A549 (cell line): ENCODE measurements at regions of chr15 and their contacts with region 1.

Region 1: DNA sequence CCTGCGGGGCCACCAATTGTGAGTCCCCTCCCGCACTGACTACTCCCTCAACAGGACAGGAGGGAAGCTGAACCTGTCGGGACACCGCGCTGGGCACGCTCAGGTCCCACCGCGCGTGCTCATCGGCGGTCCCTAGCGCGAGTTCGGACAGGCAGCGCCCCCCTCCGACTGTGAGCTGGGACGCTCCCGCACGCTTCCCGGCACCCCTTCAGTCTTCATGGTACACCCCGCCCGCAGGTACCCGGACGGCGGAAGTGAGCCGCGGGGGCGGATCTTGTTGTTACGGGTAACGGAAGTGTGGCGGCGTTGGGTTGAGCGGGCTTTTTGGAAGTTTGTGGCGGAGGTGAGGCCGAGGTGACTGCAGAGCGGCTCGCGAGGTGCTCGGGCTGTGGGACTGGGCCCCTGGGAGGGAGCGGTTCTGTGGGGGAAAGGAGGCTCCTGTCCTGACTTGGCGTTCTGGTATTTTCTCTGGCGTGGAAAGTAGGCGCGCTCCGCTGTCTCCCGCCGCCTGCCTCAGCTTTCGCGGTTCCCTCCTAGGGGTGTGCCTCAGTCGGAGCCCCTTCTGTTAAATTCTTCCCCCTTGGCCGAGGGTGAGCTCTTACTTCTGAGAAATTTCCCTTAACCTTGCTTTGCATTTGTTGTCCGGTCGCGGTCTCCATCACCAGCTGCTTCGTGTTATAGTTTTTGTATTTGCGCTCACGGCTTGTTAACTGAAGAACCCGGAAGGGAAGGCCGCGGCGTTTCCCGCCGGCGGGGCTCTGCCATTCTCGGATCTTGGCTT is at the start of gene FANCI:
- DNase-seq: peak; percentile 96 to 97
- ATAC-seq: peak; percentile 98
- H3K4me3 ChIP-seq: peak within 1 kb of the TSS; percentile 82
- H3K27ac ChIP-seq: peak within 1 kb of the TSS; percentile 79 to 88
- H3K4me1 ChIP-seq: peaks cover 32% of the 10 kb centered on the region; the same call in 2 of the 3 replicates
- CTCF ChIP-seq: peak; percentile 86
- EP300 ChIP-seq: no peak
- POLR2A ChIP-seq: peak; percentile 85
- RAD21 ChIP-seq: peak; percentile 67 to 77
- polyA plus RNA-seq, gene FANCI: 97.3 and 123 TPM in 2 replicates

Region 2: DNA sequence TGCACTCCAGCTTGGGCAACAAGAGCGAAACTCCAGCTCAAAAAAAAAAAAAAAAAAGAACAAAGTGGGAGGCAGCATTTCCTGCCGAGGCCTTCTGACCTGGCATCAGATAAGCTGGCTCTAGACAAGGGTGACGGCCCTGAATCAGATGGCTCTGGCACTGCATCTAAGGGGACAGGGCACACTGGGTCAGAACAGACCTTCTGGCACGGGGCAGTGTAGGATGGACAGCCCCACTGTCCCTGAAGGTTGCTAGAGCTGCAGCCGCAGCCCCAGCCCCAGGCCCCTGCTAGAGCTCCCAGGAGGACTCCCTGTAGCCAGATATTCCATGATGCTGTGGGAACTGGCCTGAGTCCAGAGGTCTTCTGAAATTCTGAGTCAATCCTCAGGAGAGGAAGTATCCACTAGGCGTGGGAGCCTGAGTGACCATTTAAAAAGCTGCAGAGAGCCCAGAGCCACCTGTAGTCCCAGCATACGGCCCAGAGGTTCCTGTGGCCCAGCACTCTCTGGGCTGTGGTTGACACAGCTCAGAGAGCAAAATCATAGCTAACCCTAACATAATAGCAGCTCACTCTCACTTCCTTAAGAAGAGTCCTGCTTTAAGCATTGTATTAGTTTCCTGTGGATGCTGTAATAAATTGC is 261.5 kb before region 1 on chr15:
- CTCF ChIA-PET with region 1: no interaction called
- POLR2A ChIA-PET with region 1: no interaction called
- DNase-seq: peak; percentile 72 to 86
- ATAC-seq: peak; percentile 78 to 89
- H3K4me3 ChIP-seq: no peak overlapping the region
- H3K27ac ChIP-seq: peak overlapping the region; percentile 87 to 89
- H3K4me1 ChIP-seq: peaks cover 57% of the 10 kb centered on the region
- CTCF ChIP-seq: no peak
- EP300 ChIP-seq: peak in 1 of 2 experiments; percentile 28; a peak in 2 of 5 replicates
- POLR2A ChIP-seq: no peak; the same call in none of the 2 replicates
- RAD21 ChIP-seq: no peak; a peak in 2 of 5 replicates

Region 3: DNA sequence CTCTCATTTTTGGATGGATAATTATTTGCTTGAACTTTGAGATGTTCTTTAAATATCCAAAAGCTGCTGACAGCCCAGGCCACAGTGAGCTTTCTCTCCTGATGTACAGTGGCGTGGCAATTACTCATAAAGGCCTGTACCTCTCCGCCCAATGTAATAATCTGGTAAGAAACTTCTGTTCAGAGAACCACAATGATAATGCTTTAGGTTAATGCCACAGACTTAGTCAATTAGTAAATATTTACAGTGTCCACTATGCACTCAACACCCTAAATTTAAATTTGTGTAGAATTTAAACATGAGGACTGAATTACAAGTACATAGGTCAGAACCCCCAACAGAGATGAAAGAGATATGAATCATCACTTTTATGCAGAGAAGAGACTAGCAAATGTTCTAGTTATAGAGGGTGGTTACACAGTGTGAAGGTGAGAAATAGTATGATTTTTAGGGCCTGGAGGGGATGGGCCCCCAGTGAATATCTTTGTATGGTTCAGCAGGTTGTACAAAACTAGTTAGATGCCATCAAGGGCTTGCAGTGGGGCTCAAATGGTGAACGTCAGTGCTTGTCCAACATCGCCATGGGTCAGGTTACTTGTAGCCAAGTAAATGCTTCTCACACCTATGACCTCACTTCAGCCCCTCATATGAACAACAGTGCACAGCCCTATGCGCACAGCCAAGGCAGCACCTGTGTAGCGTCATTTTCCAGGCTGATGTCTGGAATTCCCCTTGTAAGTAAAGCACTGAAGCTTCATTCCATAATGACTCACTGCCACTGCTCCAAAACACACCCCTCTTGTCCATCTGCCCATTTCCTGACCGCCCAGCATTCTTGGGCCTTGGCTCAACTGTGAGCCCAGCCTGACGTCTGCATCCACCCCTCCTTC is 142.3 kb before region 1 on chr15:
- CTCF ChIA-PET with region 1: no interaction called
- POLR2A ChIA-PET with region 1: no interaction called
- DNase-seq: peak; percentile 97 to 98
- ATAC-seq: peak; percentile 92 to 93
- H3K4me3 ChIP-seq: no peak overlapping the region; the same call in 2 of the 3 replicates
- H3K27ac ChIP-seq: peak overlapping the region; percentile 85 to 88
- H3K4me1 ChIP-seq: peaks cover 99% of the 10 kb centered on the region
- CTCF ChIP-seq: no peak
- EP300 ChIP-seq: peak; percentile 69 to 71; a peak in 2 of 5 replicates
- POLR2A ChIP-seq: no peak
- RAD21 ChIP-seq: peak; percentile 8 to 24; a peak in 1 of 5 replicates

Region 4: GRCh38 chr15:89215627-89216026 is 28.3 kb before region 1 on chr15:
- CTCF ChIA-PET with region 1: interaction called, 27 read pairs
- POLR2A ChIA-PET with region 1: no interaction called
- DNase-seq: no peak
- ATAC-seq: peak; percentile 41 to 54; a peak in 4 of 6 replicates
- H3K4me3 ChIP-seq: no peak overlapping the region
- H3K27ac ChIP-seq: no peak overlapping the region
- H3K4me1 ChIP-seq: no peaks in the 10 kb centered on the region
- CTCF ChIP-seq: no peak
- EP300 ChIP-seq: no peak
- POLR2A ChIP-seq: no peak
- RAD21 ChIP-seq: no peak

Region 5: DNA sequence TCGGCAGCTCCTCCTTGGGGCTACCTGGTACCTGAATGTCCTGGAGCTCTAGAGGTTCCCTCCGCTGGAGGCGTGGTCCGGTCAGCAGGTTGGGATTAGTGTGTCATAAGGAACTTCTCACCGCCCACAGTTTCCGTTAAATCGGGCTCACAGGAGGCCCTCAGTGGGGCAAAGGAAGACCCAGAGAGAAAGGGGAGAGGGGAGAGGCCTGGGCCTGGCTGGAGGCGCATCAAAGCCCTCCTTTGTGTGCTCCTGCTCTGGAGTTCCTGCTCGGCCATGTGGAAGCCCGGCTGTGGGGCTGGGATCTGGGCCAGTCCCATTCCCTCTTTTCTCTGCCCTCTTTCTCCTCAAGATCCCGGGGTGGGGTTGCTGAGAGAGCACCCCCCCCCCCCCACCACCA is 22.3 kb before region 1 on chr15 and contains the start of gene RLBP1:
- CTCF ChIA-PET with region 1: interaction called, 27 read pairs
- POLR2A ChIA-PET with region 1: no interaction called
- DNase-seq: no peak
- ATAC-seq: no peak
- H3K4me3 ChIP-seq: no peak within 1 kb of the TSS
- H3K27ac ChIP-seq: no peak within 1 kb of the TSS
- H3K4me1 ChIP-seq: no peaks in the 10 kb centered on the region
- CTCF ChIP-seq: no peak
- EP300 ChIP-seq: no peak
- POLR2A ChIP-seq: no peak
- RAD21 ChIP-seq: no peak
- polyA plus RNA-seq, gene RLBP1: not detected in 2 replicates

Region 6: GRCh38 chr15:89230277-89230676 is 13.6 kb before region 1 on chr15:
- CTCF ChIA-PET with region 1: interaction called, 36 read pairs
- POLR2A ChIA-PET with region 1: no interaction called
- DNase-seq: no peak
- ATAC-seq: peak; percentile 73 to 86
- H3K4me3 ChIP-seq: no peak overlapping the region
- H3K27ac ChIP-seq: no peak overlapping the region
- H3K4me1 ChIP-seq: no peaks in the 10 kb centered on the region
- CTCF ChIP-seq: no peak
- EP300 ChIP-seq: no peak
- POLR2A ChIP-seq: no peak
- RAD21 ChIP-seq: no peak